ENCODE measurements at regions of chr21 and their contacts with region 1.

Region 1: DNA sequence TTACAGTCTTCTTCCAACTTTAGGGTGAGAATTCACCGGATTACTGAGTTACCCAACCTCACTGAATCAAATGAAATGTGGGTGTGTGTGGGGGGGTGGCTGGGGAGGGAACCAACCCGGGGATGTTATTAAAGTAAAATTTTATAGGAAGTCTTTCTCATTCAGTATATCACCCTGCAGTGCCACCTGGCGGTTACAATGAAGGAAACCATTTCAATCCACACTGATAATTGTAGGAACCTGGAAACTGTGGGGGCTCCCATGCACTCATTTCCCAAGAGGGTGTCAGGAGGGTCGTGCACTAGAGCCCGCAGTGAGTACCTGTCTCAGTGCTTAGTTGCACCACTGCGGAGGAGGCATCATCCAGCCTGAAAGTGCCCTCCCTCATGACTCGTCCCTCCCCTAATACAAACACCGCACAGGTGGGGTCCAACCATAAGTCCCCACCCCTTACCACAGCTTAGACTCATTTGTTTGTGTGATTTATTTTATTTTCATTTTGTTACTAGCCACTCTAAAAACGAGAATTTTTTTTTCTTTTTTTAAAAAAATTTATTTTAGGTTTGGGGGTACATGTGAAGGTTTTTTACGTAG is 29.1 kb upstream of the IGSF5 start:
- DNase-seq: peak in 1 of 2 donors; percentile 32
- ATAC-seq: peak; percentile 45 to 56
- H3K4me3 ChIP-seq: no peak overlapping the region
- H3K27ac ChIP-seq: no peak overlapping the region
- H3K4me1 ChIP-seq: peaks cover 0 to 4% of the 10 kb centered on the region in 2 donors
- H3K27me3 ChIP-seq: peaks cover 0 to 3% (median 3%) of the 10 kb centered on the region in 3 donors
- CTCF ChIP-seq: peak; percentile 26 to 72 (median 65)
- POLR2A ChIP-seq: no peak

Region 2: DNA sequence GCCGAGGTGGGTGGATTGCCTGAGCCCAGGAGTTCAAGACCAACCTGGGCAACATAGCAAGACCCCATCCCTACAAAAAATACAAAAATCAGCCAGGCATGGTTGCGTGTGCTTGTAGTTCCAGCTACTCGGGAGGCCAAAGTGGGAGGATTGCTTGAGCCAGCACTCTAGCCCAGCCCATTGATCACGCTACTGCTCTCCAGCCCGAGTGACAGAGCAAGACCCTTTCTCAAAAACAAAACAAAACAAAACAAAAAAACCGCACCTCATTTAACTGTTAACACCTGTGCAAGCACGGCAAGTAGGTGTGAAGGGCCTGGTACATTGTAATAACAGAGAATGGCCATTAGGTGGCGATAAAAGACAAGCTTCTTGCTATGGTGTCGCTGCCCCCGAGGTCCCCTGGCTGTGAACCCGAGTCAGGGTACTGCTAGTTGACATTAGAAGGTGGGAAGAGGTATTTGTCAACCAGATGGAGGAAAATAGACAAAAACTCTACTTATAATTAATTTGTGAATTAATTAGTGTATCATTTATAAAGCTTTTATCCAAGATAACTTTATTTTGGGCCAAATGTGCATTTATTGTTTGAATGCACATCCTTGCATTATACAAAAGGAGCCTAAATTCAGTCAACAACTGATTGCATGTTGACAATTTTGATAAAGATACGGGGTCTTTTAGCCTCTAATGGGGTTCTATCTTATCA is 197.6 kb before region 1 on chr21:
- in situ Hi-C with region 1: loop called (anchors 5 kb)
- intact Hi-C with region 1: loop called (anchors 1 kb)
- DNase-seq: no peak
- ATAC-seq: peak; percentile 43 to 61
- H3K4me3 ChIP-seq: no peak overlapping the region
- H3K27ac ChIP-seq: peak overlapping the region in 1 of 4 donors; percentile 85
- H3K4me1 ChIP-seq: peaks cover 12 to 27% of the 10 kb centered on the region in 2 donors
- H3K27me3 ChIP-seq: no peaks in the 10 kb centered on the region
- CTCF ChIP-seq: peak; percentile 73 to 92 (median 83)
- POLR2A ChIP-seq: no peak

Region 3: GRCh38 chr21:39705849-39706248 is 10.1 kb before region 1 on chr21:
- in situ Hi-C with region 1: no loop called
- intact Hi-C with region 1: no loop called
- DNase-seq: no peak
- ATAC-seq: no peak
- H3K4me3 ChIP-seq: no peak overlapping the region
- H3K27ac ChIP-seq: no peak overlapping the region
- H3K4me1 ChIP-seq: no peaks in the 10 kb centered on the region
- H3K27me3 ChIP-seq: no peaks in the 10 kb centered on the region
- CTCF ChIP-seq: no peak
- POLR2A ChIP-seq: no peak

Region 4: DNA sequence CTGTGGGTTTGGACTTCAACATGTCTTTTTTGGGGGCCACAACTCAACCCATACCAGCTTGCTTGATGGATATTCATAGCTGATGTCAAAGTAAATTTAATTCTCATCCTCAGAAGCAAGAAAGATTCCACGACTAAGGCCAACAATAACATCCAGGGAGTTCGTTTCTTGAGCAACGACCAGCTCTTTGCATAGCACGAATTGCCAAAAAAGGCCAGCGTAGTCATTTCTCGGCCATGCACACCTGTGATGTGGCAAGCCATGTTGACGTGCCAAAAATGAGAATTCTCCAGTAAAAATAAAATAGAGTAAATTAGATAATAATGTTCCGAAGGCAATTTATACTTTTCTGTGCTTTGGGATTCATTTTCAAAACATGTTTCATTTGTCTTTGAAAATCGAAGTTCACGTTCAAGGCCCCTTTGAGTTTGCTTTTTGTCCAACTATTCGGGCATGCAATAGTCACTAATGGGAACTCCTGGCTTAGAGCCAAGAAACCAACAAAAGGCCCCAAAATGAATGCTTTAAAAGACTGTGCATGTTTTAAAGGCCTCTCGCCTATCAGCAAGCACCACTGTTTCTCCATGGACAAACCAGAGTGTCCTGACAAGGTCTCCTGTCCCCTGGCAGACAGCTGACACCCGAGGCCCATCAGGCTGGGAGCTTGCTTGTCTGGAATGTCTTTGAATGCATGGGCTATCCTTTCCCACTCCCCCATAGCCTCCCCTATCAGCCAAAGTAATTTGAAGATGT is 14.7 kb after region 1 on chr21:
- in situ Hi-C with region 1: no loop called
- intact Hi-C with region 1: no loop called
- DNase-seq: no peak
- ATAC-seq: no peak
- H3K4me3 ChIP-seq: no peak overlapping the region
- H3K27ac ChIP-seq: no peak overlapping the region
- H3K4me1 ChIP-seq: no peaks in the 10 kb centered on the region
- H3K27me3 ChIP-seq: no peaks in the 10 kb centered on the region
- CTCF ChIP-seq: no peak
- POLR2A ChIP-seq: no peak

Region 5: GRCh38 chr21:39924577-39925308 is 208.8 kb after region 1 on chr21:
- in situ Hi-C with region 1: no loop called
- intact Hi-C with region 1: no loop called
- DNase-seq: no peak
- ATAC-seq: no peak
- H3K4me3 ChIP-seq: no peak overlapping the region
- H3K27ac ChIP-seq: no peak overlapping the region
- H3K4me1 ChIP-seq: no peaks in the 10 kb centered on the region
- H3K27me3 ChIP-seq: no peaks in the 10 kb centered on the region
- CTCF ChIP-seq: no peak
- POLR2A ChIP-seq: no peak

Measured in gastrocnemius medialis (tissue), 4 donors.